AG04449 (cell line): ENCODE measurements at regions of chr3 and their contacts with region 1.

Region 1: GRCh38 chr3:128969993-128970739 is 23.7 kb downstream of the CFAP92 start:
- DNase-seq: no peak
- H3K4me3 ChIP-seq: no peak overlapping the region
- CTCF ChIP-seq: peak; percentile 80

Region 2: DNA sequence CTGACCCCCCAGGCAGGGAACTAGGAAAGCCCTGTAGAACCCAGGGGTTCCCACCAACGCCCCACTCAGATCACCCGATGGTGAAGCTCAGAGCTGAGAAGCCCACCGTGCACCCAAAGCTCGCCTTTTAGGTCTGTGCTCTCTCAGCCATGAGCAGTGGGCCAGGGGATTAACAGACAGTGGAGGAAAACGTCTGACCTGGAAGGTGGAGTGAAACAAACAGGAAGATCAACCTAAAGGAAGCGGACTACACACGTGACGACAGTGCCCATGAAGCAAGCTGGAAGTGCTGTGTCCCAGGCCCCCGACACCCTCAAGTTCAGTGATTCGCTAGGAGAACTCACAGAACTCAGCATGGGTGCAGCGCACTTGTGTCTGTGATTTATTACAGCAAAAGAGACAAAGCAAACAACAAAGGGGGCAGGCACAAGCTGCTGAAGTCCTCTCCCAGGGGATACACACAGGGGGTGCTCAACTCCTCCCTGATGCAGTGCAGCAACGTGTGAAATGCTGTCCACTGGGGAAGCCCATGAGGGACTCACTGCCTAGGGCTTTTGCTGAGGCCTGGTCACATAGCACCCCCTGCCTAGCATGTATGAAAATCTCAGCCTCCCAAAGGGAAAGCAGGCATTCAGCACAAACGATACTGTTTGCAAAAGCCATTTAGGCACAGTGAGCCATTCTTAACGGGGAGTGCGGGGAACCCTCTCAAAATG is 19.8 kb before region 1 on chr3:
- CTCF ChIA-PET with region 1: interaction called, 44 read pairs
- POLR2A ChIA-PET with region 1: no interaction called
- DNase-seq: no peak
- H3K4me3 ChIP-seq: no peak overlapping the region
- CTCF ChIP-seq: peak; percentile 2

Region 3: GRCh38 chr3:129016356-129016719 is 46.2 kb after region 1 on chr3:
- CTCF ChIA-PET with region 1: interaction called, 13 read pairs
- POLR2A ChIA-PET with region 1: no interaction called
- DNase-seq: no peak
- H3K4me3 ChIP-seq: no peak overlapping the region
- CTCF ChIP-seq: no peak

Region 4: DNA sequence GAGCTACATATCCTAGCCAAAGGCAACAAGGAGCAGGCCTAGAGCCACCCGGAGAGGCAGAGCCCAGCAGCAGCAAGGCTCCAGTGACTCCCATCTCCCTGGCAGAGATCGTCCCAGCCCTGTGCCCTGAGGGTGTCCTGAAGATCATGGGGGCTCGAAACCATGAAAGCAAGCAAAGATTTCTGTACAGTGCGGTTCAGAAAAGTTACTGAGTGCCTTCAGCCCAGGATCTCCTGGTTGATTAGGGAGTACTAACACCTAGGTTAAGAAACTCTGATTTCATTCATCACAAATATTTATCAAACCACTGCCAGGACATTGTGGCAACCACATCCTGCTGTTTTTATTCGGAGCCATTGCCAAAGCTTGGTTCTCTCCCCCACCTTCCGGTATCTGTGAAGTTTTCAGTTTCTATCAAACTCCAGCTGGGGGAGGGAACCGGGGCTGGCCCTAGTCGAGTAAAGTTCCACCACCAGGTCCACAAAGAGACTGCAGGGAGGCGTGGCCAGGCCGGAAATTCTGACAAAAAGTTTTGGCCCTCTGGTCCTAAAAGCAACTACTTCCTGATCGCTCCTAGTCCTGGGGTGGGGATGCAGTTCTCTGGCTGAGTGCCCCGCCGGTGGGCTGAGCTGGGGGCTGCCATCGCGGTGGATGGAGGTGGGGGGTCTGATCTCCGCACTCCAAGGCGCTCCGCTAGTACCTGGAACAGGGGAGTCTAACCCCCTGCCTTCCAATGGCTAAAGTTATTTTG is 150.3 kb after region 1 on chr3:
- CTCF ChIA-PET with region 1: interaction called, 52 read pairs
- POLR2A ChIA-PET with region 1: no interaction called
- DNase-seq: peak; percentile 50
- H3K4me3 ChIP-seq: peak overlapping the region; percentile 85
- CTCF ChIP-seq: peak; percentile 39

Region 5: DNA sequence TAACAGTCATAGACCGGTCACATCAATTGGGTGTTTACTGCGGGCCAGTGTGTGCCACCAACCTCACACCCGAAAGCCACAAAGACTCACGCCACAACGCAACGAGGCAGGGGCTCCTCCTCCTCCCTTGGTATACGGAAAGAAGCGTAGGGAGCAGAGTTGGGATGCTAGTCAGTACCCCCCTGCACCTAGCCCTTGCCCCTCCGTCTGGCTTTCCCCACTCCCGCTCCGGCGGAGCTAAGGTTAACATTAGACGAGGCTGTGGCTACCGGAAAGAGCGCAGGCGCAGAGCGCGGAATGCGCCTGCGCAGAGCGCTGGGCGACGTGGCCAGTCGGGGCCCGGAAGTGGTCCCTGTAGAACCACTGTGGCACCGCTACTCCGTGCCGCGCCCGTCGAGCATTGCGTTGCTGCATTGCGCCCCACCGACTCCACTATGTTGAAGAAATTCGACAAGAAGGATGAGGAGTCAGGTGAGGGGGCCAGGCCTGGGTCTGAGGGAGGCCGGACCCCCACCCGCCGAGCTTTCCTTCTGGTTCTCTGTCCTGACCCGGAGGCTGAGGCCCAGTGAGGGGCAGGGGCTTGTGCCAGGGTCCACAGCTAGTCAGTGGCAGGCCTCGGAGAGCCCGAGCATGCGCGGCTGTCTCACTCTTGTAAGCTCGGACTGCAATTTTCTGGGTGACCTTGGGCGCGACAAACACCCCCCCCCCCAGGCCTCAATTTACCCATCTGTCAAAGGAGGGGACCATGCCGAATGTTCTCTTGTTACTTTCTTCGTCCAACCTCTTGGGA is 279.3 kb after region 1 on chr3 and contains the start of gene COPG1:
- CTCF ChIA-PET with region 1: interaction called, 196 read pairs
- POLR2A ChIA-PET with region 1: interaction called, 4 read pairs
- DNase-seq: peak; percentile 14
- H3K4me3 ChIP-seq: peak within 1 kb of the TSS; percentile 98
- CTCF ChIP-seq: no peak

Region 6: GRCh38 chr3:129316131-129317013 is 346.2 kb after region 1 on chr3:
- CTCF ChIA-PET with region 1: interaction called, 29 read pairs
- POLR2A ChIA-PET with region 1: interaction called, 4 read pairs
- DNase-seq: no peak
- H3K4me3 ChIP-seq: peak overlapping the region; percentile 86
- CTCF ChIP-seq: peak; percentile 70